Prostate gland (tissue), 2 donors: ENCODE measurements at regions of chr3 and their contacts with region 1.

Region 1: GRCh38 chr3:39189959-39190269 is 2.5 kb downstream of the XIRP1 start:
- DNase-seq: peak; percentile 76
- H3K4me3 ChIP-seq: no peak overlapping the region
- H3K27ac ChIP-seq: no peak overlapping the region
- H3K4me1 ChIP-seq: no peaks in the 10 kb centered on the region
- H3K27me3 ChIP-seq: no peaks in the 10 kb centered on the region
- CTCF ChIP-seq: peak in 3 of 4 experiments; percentile 69 to 86 (median 86)
- POLR2A ChIP-seq: no peak

Region 2: GRCh38 chr3:39107388-39108199 is 82.3 kb before region 1 on chr3 and contains the starts of genes GORASP1 and TTC21A:
- intact Hi-C with region 1: loop called (anchors 5 kb)
- DNase-seq: peak; percentile 90
- H3K4me3 ChIP-seq: peak within 1 kb of the TSS; percentile 96 to 99
- H3K27ac ChIP-seq: peak within 1 kb of the TSS; percentile 87 to 94
- H3K4me1 ChIP-seq: peaks cover 7% of the 10 kb centered on the region
- H3K27me3 ChIP-seq: no peaks in the 10 kb centered on the region
- CTCF ChIP-seq: peak in 1 of 4 experiments; percentile 14
- POLR2A ChIP-seq: peak; percentile 79
- total RNA-seq, gene GORASP1: 76.5 to 104 TPM
- total RNA-seq, gene TTC21A: 9.0 to 23.2 TPM

Region 3: GRCh38 chr3:39288300-39288808 is 98.4 kb after region 1 on chr3:
- intact Hi-C with region 1: loop called (anchors 2 kb)
- DNase-seq: peak; percentile 79
- H3K4me3 ChIP-seq: no peak overlapping the region
- H3K27ac ChIP-seq: no peak overlapping the region
- H3K4me1 ChIP-seq: no peaks in the 10 kb centered on the region
- H3K27me3 ChIP-seq: no peaks in the 10 kb centered on the region
- CTCF ChIP-seq: peak; percentile 56 to 95 (median 90)
- POLR2A ChIP-seq: no peak